Testis (tissue), 5 donors: ENCODE measurements at regions of chr6 and their contacts with region 1.

Region 1: DNA sequence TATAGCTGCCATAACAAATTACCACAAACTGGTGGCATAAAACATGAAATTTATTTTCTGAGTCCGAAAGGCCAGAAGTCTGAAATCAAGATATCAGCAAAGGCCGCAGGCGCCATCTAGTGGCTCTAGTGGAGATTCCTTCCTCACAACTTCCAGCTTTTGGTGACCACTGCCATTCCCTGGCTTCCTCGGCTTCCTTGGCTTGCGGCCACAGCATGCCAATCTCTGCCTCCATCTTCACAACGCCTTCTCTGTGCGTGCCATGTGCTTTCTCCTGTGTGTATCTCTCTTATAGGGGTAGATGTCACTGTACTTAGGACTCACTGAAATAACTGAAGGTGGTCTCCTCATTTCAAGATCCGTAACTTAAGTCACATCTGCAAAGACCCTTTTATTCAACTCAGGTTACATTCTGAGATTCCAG is 5.4 kb upstream of the PLAGL1 start:
- DNase-seq: peak; percentile 87
- H3K4me3 ChIP-seq: no peak overlapping the region
- H3K27ac ChIP-seq: no peak overlapping the region
- H3K4me1 ChIP-seq: no peaks in the 10 kb centered on the region
- H3K27me3 ChIP-seq: no peaks in the 10 kb centered on the region
- CTCF ChIP-seq: peak; percentile 76 to 90 (median 79)
- POLR2A ChIP-seq: no peak

Region 2: DNA sequence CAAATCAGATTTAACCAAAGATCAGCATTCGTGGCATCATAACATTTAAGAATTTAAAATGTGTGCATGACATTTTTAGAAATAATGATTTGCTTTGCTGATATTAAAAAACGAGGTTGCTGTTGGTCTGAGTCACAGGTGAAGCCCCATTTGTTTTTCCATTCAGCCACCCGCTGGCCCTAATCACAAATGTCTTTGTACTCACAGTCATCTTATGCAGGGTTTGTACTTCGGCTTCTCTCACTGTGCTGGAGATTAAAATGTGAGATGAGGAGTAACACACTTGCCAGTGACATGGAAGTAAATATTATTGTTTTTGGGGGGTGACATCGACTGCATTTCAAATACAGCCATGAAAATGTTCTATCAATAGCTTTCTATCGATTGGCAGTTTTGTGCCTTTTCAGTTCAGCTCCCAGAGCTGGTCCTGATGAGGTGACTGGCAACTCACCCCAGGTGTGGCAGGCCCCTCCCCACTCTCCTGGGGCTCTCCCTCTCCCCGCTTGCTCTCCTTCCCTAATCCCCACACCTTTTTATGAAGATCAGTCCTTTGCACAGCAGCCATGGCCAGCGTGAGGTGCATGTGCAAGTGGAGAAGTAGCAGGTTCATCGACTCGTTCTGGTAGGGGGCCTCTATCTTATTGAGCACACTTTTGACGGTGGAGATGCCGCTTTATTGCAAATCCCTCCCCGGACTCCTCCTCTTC is 443.2 kb before region 1 on chr6:
- intact Hi-C with region 1: loop called (anchors 5 kb)
- DNase-seq: no peak
- H3K4me3 ChIP-seq: no peak overlapping the region
- H3K27ac ChIP-seq: no peak overlapping the region
- H3K4me1 ChIP-seq: no peaks in the 10 kb centered on the region
- H3K27me3 ChIP-seq: no peaks in the 10 kb centered on the region
- CTCF ChIP-seq: no peak
- POLR2A ChIP-seq: no peak

Region 3: DNA sequence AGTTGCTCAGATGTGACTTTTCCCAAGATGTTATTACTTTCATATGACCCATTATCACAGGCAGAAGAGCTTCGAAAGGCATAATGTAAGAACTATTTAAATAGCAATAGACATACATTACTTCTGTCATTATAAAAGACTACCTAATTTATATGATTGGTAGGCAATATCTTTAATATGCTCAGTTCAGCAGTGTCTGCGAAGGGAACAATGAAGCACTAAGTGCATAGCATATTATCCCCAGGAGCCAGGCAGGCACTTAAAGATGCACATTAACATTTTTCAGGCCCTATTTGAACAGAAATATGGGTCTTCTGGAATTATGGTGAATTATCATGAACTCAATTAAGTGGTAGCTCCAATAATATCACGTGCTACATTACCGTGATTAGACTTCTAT is 1504.0 kb after region 1 on chr6:
- intact Hi-C with region 1: no loop called
- DNase-seq: no peak
- H3K4me3 ChIP-seq: no peak overlapping the region
- H3K27ac ChIP-seq: no peak overlapping the region
- H3K4me1 ChIP-seq: no peaks in the 10 kb centered on the region
- H3K27me3 ChIP-seq: no peaks in the 10 kb centered on the region
- CTCF ChIP-seq: no peak
- POLR2A ChIP-seq: no peak